Dorsolateral prefrontal cortex (tissue), 120 donors: ENCODE measurements at regions of chr20 and their contacts with region 1.

Region 1: GRCh38 chr20:37527638-37528441 is at the start of gene BLCAP:
- DNase-seq: peak; percentile 79 to 91 (median 88)
- H3K4me3 ChIP-seq: peak within 1 kb of the TSS; percentile 73 to 100 (median 99)
- H3K27ac ChIP-seq: peak within 1 kb of the TSS; percentile 86 to 100 (median 99)
- H3K27me3 ChIP-seq: no peaks in the 10 kb centered on the region
- CTCF ChIP-seq: peak in 18 of 56 donors; percentile 7 to 53 (median 28)
- total RNA-seq, gene BLCAP: 82.4 to 206 (median 151) TPM

Region 2: GRCh38 chr20:37095599-37096414 is 432.0 kb before region 1 on chr20 and contains the start of gene RBL1:
- intact Hi-C with region 1: loop called in 1 of 2 experiments (anchors 10 kb)
- DNase-seq: peak; percentile 77 to 91 (median 85)
- H3K4me3 ChIP-seq: peak within 1 kb of the TSS; percentile 70 to 100 (median 92)
- H3K27ac ChIP-seq: peak within 1 kb of the TSS in 56 of 59 donors; percentile 1 to 89 (median 70)
- H3K27me3 ChIP-seq: no peaks in the 10 kb centered on the region
- CTCF ChIP-seq: peak; percentile 25 to 83 (median 60)
- total RNA-seq, gene RBL1: 3.8 to 16.4 (median 7.5) TPM

Region 3: DNA sequence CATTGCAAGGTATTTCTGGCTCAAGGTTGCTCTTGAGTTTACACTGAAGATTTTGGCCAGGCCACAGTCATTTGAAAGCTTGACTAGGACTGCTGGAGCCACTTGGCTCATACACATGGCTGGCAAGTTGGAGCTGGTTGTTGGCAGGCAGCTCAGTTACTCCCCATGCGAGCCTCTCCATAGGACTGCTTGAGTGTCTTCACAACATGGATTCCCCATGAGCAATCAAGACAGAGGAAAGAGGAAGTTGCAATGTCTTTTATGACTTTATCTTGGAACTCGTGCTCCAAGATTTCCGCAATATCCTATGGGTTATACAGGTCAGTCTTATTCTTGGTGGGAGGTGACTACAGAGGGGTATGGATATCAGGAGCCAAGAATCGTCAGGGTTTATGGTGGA is 239.7 kb before region 1 on chr20:
- intact Hi-C with region 1: loop called in 1 of 2 experiments (anchors 5 kb)
- DNase-seq: no peak
- H3K4me3 ChIP-seq: no peak overlapping the region
- H3K27ac ChIP-seq: no peak overlapping the region
- H3K27me3 ChIP-seq: no peaks in the 10 kb centered on the region
- CTCF ChIP-seq: no peak

Region 4: GRCh38 chr20:37384683-37385174 is 143.1 kb before region 1 on chr20:
- intact Hi-C with region 1: loop called in 1 of 2 experiments (anchors 5 kb)
- DNase-seq: peak in 6 of 10 donors; percentile 36 to 83 (median 60)
- H3K4me3 ChIP-seq: peak overlapping the region in 58 of 59 donors; percentile 19 to 66 (median 51)
- H3K27ac ChIP-seq: peak overlapping the region in 9 of 59 donors; percentile 1 to 68 (median 43)
- H3K27me3 ChIP-seq: no peaks in the 10 kb centered on the region
- CTCF ChIP-seq: peak; percentile 69 to 96 (median 88)

Region 5: DNA sequence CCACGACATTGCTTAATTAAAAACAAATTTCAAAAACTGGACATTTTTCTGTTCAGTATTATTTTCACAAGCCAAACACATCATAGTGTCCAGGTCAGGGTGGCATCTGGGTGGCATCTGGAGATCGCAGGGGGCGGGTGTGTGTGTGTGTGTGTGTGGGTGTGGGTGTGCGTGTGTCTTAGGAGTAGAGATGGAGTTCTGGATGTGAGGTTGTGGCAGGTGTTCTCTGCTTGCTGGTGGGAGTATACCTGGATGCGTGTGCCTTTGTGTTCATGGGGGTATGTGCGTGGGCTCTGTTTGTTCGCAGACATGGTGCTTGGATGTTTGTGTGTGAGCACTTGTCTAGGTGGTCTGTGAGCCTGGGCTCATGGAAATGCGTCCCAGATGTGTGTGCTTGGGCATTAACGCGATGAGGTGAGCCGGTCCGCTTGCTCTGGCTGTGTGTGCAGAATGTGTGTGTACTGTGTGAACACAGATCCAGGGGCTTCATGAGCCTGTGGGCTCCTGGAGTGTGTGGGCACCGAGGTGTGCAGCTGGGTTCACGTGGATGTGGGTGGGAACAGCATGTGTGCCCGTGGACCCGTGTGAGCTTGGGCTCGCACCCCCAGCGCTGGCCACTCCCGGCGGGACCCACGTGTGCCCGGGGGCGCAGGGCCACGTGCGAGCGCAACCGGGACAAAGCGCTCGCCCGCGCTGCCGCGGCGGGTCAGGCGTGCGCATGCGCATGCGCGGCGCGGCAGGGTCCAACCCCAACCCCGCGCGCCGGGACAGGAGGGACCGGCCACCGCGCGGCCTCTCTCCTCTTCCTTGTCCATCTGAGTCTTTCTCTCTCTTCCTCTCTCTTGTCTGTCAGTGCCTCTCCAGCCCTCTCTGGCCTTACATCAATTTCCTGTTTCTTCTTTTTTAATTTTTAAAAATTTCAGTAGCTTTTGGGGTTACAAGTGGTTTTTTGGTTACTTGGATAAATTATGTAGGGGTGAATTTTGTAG is 121.5 kb before region 1 on chr20:
- intact Hi-C with region 1: loop called in 1 of 2 experiments (anchors 5 kb)
- DNase-seq: peak in 6 of 10 donors; percentile 23 to 73 (median 56)
- H3K4me3 ChIP-seq: peak overlapping the region; percentile 15 to 60 (median 43)
- H3K27ac ChIP-seq: peak overlapping the region in 26 of 59 donors; percentile 10 to 76 (median 50)
- H3K27me3 ChIP-seq: peaks cover 0 to 6% (median 0%) of the 10 kb centered on the region in 45 donors
- CTCF ChIP-seq: peak in 5 of 56 donors; percentile 9 to 23 (median 22)

Region 6: DNA sequence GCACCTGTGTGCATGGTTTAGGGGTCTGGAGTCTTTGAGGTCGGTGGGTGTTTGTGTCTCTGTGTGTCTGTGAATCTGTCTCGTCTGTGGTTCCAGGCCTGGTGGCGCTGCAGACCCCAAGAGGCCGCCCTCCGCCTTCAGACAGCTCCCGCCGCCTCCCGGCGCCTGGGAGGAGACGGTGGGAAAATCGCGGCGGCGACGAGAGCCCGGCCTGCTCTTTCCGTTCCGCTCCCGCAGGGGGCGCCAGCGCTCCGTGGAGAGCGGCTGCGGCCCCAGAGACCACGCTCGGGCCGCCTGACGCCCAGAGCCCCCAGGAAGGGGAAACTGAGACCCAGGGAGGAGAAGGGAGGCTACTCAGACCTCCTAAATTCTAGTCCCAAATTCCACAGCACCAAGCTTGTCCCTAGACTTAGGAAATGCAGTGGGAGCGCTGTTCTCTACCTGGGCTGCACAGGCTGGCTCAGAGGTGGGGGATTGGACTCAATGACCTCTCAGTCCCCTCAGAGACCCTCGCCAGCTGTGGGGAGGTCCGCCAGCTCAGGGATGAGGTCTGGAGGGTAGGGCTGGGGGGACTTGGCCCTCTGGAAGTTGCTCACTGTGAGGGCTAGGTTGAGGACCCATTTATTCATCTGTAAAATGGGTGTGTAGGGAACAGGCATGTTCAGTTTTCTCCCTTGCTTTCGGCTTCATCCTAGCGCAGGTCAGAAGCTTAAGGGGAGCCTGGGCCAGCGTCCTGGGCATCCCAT is 36.7 kb after region 1 on chr20:
- intact Hi-C with region 1: no loop called
- DNase-seq: peak in 6 of 10 donors; percentile 20 to 79 (median 42)
- H3K4me3 ChIP-seq: peak overlapping the region in 10 of 59 donors; percentile 4 to 40 (median 20)
- H3K27ac ChIP-seq: no peak overlapping the region
- H3K27me3 ChIP-seq: peaks cover 0 to 32% (median 6%) of the 10 kb centered on the region in 45 donors
- CTCF ChIP-seq: peak; percentile 65 to 92 (median 84)